ENCODE measurements at regions of chr11 and their contacts with region 1.

Region 1: GRCh38 chr11:63489879-63490278 is 1.1 kb downstream of the PLAAT5 start:
- DNase-seq: no peak
- ATAC-seq: no peak
- H3K4me3 Mint-ChIP-seq: no peak overlapping the region
- H3K27ac Mint-ChIP-seq: no peak overlapping the region
- H3K4me1 Mint-ChIP-seq: peaks cover 6% of the 10 kb centered on the region
- H3K27me3 Mint-ChIP-seq: peaks cover 41% of the 10 kb centered on the region
- CTCF ChIP-seq: no peak

Region 2: GRCh38 chr11:62985041-62985750 is 504.7 kb before region 1 on chr11:
- CTCF ChIA-PET with region 1: no interaction called
- POLR2A ChIA-PET with region 1: no interaction called
- intact Hi-C with region 1: no loop called
- DNase-seq: no peak
- ATAC-seq: no peak
- H3K4me3 Mint-ChIP-seq: no peak overlapping the region
- H3K27ac Mint-ChIP-seq: no peak overlapping the region
- H3K4me1 Mint-ChIP-seq: no peaks in the 10 kb centered on the region
- H3K27me3 Mint-ChIP-seq: peaks cover 10% of the 10 kb centered on the region
- CTCF ChIP-seq: no peak

Region 3: DNA sequence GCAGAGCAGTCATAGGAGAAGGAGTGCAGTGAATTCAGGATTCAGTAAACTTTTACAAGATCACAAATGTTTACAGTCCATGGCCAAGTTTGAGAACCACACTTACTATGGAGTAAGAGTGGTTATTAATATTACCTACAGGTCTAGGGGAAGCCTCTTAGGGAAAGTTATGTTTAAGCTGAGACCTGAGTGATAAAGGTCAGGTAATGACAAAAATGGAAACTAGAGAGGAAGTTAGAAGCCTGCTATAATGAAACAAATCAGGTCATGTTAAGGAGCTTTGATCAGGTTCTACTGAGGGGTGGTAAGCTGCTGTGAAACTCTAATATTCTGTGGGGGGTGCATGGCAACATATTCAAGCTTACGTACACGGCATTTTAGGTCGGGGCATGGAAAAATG is 152.8 kb before region 1 on chr11:
- CTCF ChIA-PET with region 1: no interaction called
- POLR2A ChIA-PET with region 1: no interaction called
- intact Hi-C with region 1: no loop called
- DNase-seq: no peak
- ATAC-seq: no peak
- H3K4me3 Mint-ChIP-seq: no peak overlapping the region
- H3K27ac Mint-ChIP-seq: no peak overlapping the region
- H3K4me1 Mint-ChIP-seq: no peaks in the 10 kb centered on the region
- H3K27me3 Mint-ChIP-seq: peaks cover 19% of the 10 kb centered on the region
- CTCF ChIP-seq: no peak

Region 4: GRCh38 chr11:63553741-63554151 is 63.9 kb after region 1 on chr11:
- CTCF ChIA-PET with region 1: no interaction called
- POLR2A ChIA-PET with region 1: no interaction called
- intact Hi-C with region 1: loop called (anchors 10 kb)
- DNase-seq: no peak
- ATAC-seq: peak; percentile 82
- H3K4me3 Mint-ChIP-seq: peak overlapping the region; percentile 76
- H3K27ac Mint-ChIP-seq: no peak overlapping the region
- H3K4me1 Mint-ChIP-seq: peaks cover 31% of the 10 kb centered on the region
- H3K27me3 Mint-ChIP-seq: peaks cover 6% of the 10 kb centered on the region
- CTCF ChIP-seq: no peak

Measured in activated B cell treated with CpG ODN at 0.5 μM for 24 hours (primary cell).